Activated CD8-positive, alpha-beta T cell treated with anti-CD3 and anti-CD28 coated beads for 36 hours (primary cell): ENCODE measurements at regions of chr13 and their contacts with region 1.

Region 1: GRCh38 chr13:40922437-40923040 is 96.6 kb downstream of the ELF1 start:
- DNase-seq: no peak
- ATAC-seq: no peak
- H3K4me3 Mint-ChIP-seq: peak overlapping the region; percentile 52
- H3K27ac Mint-ChIP-seq: peak overlapping the region; percentile 77
- H3K4me1 Mint-ChIP-seq: peaks cover 17% of the 10 kb centered on the region
- H3K27me3 Mint-ChIP-seq: no peaks in the 10 kb centered on the region
- CTCF ChIP-seq: no peak

Region 2: GRCh38 chr13:40933508-40934204 is 11.1 kb after region 1 on chr13:
- CTCF ChIA-PET with region 1: interaction called, 9 read pairs
- POLR2A ChIA-PET with region 1: interaction called, 11 read pairs
- intact Hi-C with region 1: no loop called
- DNase-seq: peak; percentile 41
- ATAC-seq: peak; percentile 67
- H3K4me3 Mint-ChIP-seq: no peak overlapping the region
- H3K27ac Mint-ChIP-seq: peak overlapping the region; percentile 65
- H3K4me1 Mint-ChIP-seq: peaks cover 47% of the 10 kb centered on the region
- H3K27me3 Mint-ChIP-seq: no peaks in the 10 kb centered on the region
- CTCF ChIP-seq: no peak